ENCODE measurements at regions of chr11 and their contacts with region 1.

Region 1: GRCh38 chr11:47186076-47186936 is at the start of gene PACSIN3:
- DNase-seq: peak; percentile 43
- ATAC-seq: peak; percentile 20
- H3K4me3 ChIP-seq: peak within 1 kb of the TSS; percentile 70 to 86 (median 77)
- H3K27ac ChIP-seq: peak within 1 kb of the TSS; percentile 98
- H3K4me1 ChIP-seq: peaks cover 56% of the 10 kb centered on the region
- H3K27me3 ChIP-seq: no peaks in the 10 kb centered on the region
- CTCF ChIP-seq: no peak
- EP300 ChIP-seq: no peak
- POLR2A ChIP-seq: peak in 1 of 2 experiments; percentile 63; a peak in 2 of 4 replicates
- RAD21 ChIP-seq: no peak
- total RNA-seq, gene PACSIN3: 86.4 and 93.3 TPM in 2 replicates

Region 2: GRCh38 chr11:46686886-46687795 is 499.2 kb before region 1 on chr11:
- CTCF ChIA-PET with region 1: no interaction called
- POLR2A ChIA-PET with region 1: no interaction called
- in situ Hi-C with region 1: no loop called
- intact Hi-C with region 1: no loop called
- DNase-seq: no peak
- ATAC-seq: no peak
- H3K4me3 ChIP-seq: no peak overlapping the region
- H3K27ac ChIP-seq: no peak overlapping the region
- H3K4me1 ChIP-seq: peaks cover 19% of the 10 kb centered on the region
- H3K27me3 ChIP-seq: no peaks in the 10 kb centered on the region
- CTCF ChIP-seq: no peak
- EP300 ChIP-seq: no peak
- POLR2A ChIP-seq: no peak
- RAD21 ChIP-seq: no peak

Region 3: DNA sequence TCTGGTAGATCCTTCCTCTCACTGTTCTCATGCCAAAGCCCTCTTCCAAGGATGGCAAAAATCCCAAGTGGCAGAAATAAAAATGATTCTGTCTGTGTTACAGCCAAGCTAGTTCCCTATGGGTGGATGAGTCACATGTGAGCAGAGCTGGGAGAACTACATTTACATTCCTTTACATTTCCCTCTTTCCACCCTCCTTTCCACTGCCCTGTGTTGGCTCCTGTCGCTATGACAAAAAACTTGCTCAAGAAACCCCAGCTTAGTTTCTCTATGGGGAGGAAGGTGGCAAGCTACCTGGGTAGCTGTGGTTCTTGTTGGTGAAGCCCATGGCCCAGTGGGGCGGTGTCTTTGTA is 18.3 kb after region 1 on chr11:
- CTCF ChIA-PET with region 1: no interaction called
- POLR2A ChIA-PET with region 1: interaction called, 19 read pairs
- in situ Hi-C with region 1: no loop called
- intact Hi-C with region 1: no loop called
- DNase-seq: no peak
- ATAC-seq: peak; percentile 34; the same call in 2 of the 3 replicates
- H3K4me3 ChIP-seq: no peak overlapping the region
- H3K27ac ChIP-seq: no peak overlapping the region
- H3K4me1 ChIP-seq: peaks cover 63% of the 10 kb centered on the region
- H3K27me3 ChIP-seq: no peaks in the 10 kb centered on the region
- CTCF ChIP-seq: no peak
- EP300 ChIP-seq: no peak
- POLR2A ChIP-seq: no peak
- RAD21 ChIP-seq: no peak

Region 4: DNA sequence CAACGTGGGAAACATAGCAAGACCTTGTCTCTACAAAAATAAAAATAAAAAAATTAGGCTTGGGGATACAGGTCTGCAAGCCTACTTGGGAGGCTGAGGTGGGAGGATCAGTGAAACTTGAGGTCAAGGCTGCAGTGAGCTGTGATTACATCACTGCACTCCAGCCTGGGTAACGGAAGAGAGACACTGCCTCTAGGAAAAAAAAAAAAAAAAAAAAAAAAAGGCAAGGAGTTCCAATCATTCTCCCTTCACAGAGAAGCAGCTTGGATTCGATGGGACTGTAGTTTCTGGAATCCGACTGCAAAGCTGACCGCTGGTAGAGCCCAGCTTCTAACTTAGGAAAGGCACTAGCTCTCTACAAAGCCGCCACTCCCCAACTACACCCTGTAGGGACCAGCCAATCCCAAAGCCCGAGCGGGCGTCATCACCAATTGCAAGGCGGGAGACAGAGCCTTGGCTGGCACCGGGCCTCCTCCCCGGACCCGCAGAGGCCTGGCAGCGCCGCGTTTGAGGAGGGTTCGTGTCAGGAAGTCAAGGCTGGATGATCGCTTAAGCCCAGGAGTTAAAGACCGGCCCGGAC is 27.8 kb after region 1 on chr11:
- CTCF ChIA-PET with region 1: no interaction called
- POLR2A ChIA-PET with region 1: interaction called, 247 read pairs
- in situ Hi-C with region 1: no loop called
- intact Hi-C with region 1: loop called (anchors 2 kb)
- DNase-seq: peak; percentile 86
- ATAC-seq: peak; percentile 90
- H3K4me3 ChIP-seq: peak overlapping the region; percentile 70 to 86 (median 79)
- H3K27ac ChIP-seq: peak overlapping the region; percentile 73
- H3K4me1 ChIP-seq: peaks cover 57% of the 10 kb centered on the region
- H3K27me3 ChIP-seq: no peaks in the 10 kb centered on the region; a peak in 1 of 5 replicates
- CTCF ChIP-seq: no peak
- EP300 ChIP-seq: no peak
- POLR2A ChIP-seq: peak; percentile 21 to 58; a peak in 3 of 4 replicates
- RAD21 ChIP-seq: no peak

Region 5: GRCh38 chr11:47220401-47220824 is 34.1 kb after region 1 on chr11:
- CTCF ChIA-PET with region 1: no interaction called
- POLR2A ChIA-PET with region 1: interaction called, 247 read pairs
- in situ Hi-C with region 1: no loop called
- intact Hi-C with region 1: loop called (anchors 2 kb)
- DNase-seq: peak; percentile 25
- ATAC-seq: no peak
- H3K4me3 ChIP-seq: no peak overlapping the region
- H3K27ac ChIP-seq: no peak overlapping the region
- H3K4me1 ChIP-seq: peaks cover 48% of the 10 kb centered on the region
- H3K27me3 ChIP-seq: no peaks in the 10 kb centered on the region; a peak in 1 of 5 replicates
- CTCF ChIP-seq: no peak
- EP300 ChIP-seq: no peak
- POLR2A ChIP-seq: no peak
- RAD21 ChIP-seq: no peak

Region 6: GRCh38 chr11:47233989-47234668 is 47.8 kb after region 1 on chr11:
- CTCF ChIA-PET with region 1: no interaction called
- POLR2A ChIA-PET with region 1: interaction called, 13 read pairs
- in situ Hi-C with region 1: no loop called
- intact Hi-C with region 1: no loop called
- DNase-seq: peak; percentile 41
- ATAC-seq: peak; percentile 69
- H3K4me3 ChIP-seq: no peak overlapping the region
- H3K27ac ChIP-seq: no peak overlapping the region
- H3K4me1 ChIP-seq: peaks cover 16% of the 10 kb centered on the region
- H3K27me3 ChIP-seq: no peaks in the 10 kb centered on the region
- CTCF ChIP-seq: peak; percentile 59
- EP300 ChIP-seq: no peak
- POLR2A ChIP-seq: no peak; a peak in 1 of 4 replicates
- RAD21 ChIP-seq: peak; percentile 40; the same call in 1 of the 2 replicates

Measured in HepG2 (cell line).